ENCODE measurements at regions of chr19 and their contacts with region 1.

Region 1: GRCh38 chr19:16338470-16339360 is 14.1 kb downstream of the KLF2 start:
- DNase-seq: peak in 12 of 14 experiments; percentile 24 to 82 (median 50)
- ATAC-seq: peak; percentile 54
- H3K4me3 ChIP-seq: peak overlapping the region; percentile 40
- H3K4me3 Mint-ChIP-seq: peak overlapping the region; percentile 90
- H3K27ac ChIP-seq: peak overlapping the region; percentile 14 to 46
- H3K27ac Mint-ChIP-seq: peak overlapping the region; percentile 93
- H3K4me1 ChIP-seq: peaks cover 77% of the 10 kb centered on the region
- H3K4me1 Mint-ChIP-seq: peaks cover 72% of the 10 kb centered on the region
- H3K27me3 ChIP-seq: no peaks in the 10 kb centered on the region
- H3K27me3 Mint-ChIP-seq: no peaks in the 10 kb centered on the region
- CTCF ChIP-seq: peak; percentile 17

Region 2: DNA sequence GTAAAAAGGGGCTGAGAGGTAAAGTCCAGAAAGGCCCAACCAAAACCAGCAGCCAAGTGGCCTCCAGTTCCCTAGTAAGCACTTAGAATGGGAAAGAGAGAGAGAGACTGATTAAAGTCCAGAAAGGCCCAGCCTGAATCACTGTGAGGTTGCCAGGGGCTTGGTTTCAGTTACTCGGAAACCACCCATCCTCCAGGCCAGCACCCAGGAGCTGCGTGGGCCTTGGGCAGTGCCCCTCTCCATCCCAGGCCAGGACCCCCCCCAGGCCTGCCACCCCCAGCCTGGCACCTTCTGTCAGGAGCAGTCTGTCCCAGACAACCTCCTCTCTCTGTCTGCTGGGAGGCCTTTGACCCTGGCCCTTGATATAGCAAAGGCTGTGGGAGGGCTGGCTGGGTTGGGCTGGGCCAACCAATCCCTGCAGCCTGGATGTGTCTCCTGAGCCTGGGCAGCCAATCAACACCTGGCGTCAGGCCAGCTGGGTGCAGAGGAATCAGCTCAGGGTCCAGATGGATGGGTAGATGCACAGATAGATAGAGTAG is 440.9 kb before region 1 on chr19 and contains the start of gene CYP4F2:
- CTCF ChIA-PET with region 1: no interaction called
- POLR2A ChIA-PET with region 1: no interaction called
- intact Hi-C with region 1: no loop called
- DNase-seq: no peak
- ATAC-seq: no peak
- H3K4me3 ChIP-seq: no peak within 1 kb of the TSS
- H3K4me3 Mint-ChIP-seq: no peak within 1 kb of the TSS
- H3K27ac ChIP-seq: no peak within 1 kb of the TSS
- H3K27ac Mint-ChIP-seq: no peak within 1 kb of the TSS
- H3K4me1 ChIP-seq: no peaks in the 10 kb centered on the region
- H3K4me1 Mint-ChIP-seq: peaks cover 10% of the 10 kb centered on the region
- H3K27me3 ChIP-seq: peaks cover 11 to 13% of the 10 kb centered on the region in 2 experiments
- H3K27me3 Mint-ChIP-seq: peaks cover 55% of the 10 kb centered on the region
- CTCF ChIP-seq: no peak
- total RNA-seq, gene CYP4F2: not detected

Region 3: DNA sequence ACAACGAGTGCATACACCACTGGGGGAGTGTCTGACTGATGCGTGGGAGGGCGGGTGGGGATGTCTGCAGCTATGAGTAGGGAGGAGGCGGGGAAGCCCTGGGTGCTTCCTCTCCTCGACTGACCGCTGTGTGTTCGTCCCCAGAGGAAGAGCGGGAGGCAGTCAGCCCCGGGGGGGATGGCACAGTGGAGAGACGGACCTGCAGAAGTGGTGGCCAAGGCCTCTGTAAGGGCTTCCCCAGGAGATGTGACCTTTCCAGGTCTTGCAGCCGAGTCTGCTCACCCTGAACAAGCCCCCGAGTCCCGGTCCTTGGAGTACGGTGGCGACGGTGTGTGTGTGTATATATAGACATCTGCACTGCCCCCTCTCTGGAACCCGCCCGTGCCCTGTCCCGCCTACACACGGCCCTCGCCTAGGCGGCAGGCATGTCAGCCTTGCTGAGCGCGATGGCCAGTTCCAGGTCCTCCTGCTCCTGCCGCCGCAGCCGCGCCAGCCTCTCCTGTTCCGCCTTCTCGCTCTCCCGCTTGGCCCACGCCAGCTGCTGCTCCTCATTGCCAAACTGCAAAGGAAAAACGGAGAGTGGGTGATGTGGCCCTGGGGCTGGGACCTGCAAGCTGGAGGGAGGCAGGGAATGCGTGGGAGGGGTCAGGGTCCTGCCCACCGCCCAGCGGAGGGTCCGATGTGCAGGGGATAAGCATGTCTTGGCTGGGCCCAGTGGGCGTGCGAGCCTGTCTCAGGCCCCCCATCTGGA is 16.8 kb after region 1 on chr19:
- CTCF ChIA-PET with region 1: interaction called, 6 read pairs
- POLR2A ChIA-PET with region 1: interaction called, 3,819 read pairs
- intact Hi-C with region 1: loop called in 1 of 2 experiments (anchors 2 kb)
- DNase-seq: peak in 4 of 14 experiments; percentile 19 to 60 (median 54)
- ATAC-seq: peak; percentile 74
- H3K4me3 ChIP-seq: no peak overlapping the region
- H3K4me3 Mint-ChIP-seq: peak overlapping the region; percentile 63
- H3K27ac ChIP-seq: no peak overlapping the region
- H3K27ac Mint-ChIP-seq: peak overlapping the region; percentile 68
- H3K4me1 ChIP-seq: peaks cover 83% of the 10 kb centered on the region
- H3K4me1 Mint-ChIP-seq: peaks cover 79% of the 10 kb centered on the region
- H3K27me3 ChIP-seq: no peaks in the 10 kb centered on the region
- H3K27me3 Mint-ChIP-seq: no peaks in the 10 kb centered on the region
- CTCF ChIP-seq: no peak

Measured in CD4-positive, alpha-beta T cell (primary cell).